ENCODE measurements at regions of chr20 and their contacts with region 1.

Region 1: GRCh38 chr20:58179432-58180099 is 48.9 kb downstream of the ANKRD60 start:
- DNase-seq: peak; percentile 77
- ATAC-seq: peak; percentile 74

Region 2: DNA sequence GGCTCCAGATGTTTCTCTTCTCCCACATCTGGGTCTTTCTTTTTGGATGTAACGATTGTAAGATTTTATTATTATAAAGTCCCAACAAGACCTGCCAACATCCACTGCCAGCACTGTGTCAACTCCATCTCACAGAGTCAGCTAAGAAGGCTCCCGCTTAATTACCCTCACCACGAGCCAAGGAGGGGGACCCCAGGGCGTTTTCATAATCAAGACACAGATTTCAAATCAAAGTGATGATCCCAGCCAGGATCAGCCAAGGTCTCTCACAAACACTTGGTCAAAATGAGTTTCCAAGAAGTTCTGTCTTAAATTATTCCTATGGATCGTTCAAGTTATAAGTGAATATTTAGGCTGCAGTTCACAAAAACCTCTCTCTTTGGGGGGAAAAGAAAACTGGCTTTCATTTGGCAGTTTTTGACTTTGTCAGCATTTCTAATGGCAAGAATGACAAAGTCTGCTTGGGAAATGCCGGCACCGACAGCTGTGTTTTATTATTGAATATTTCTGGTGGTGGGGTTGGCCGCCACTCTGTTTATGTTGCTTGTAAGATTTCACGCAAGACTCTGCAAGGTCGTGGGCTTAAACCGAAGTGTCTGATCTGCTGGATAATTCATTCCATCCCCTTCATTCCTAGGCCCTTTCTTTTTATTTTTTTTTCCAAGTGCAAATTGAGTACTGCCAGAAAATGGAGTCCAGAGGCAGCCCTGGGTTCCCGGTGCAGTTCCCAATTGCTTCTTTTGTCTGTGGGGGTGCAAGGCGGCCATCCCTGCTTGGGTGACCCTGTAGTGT is 299.6 kb before region 1 on chr20:
- intact Hi-C with region 1: loop called (anchors 10 kb)
- DNase-seq: peak; percentile 75
- ATAC-seq: peak; percentile 85

Region 3: GRCh38 chr20:57908704-57909630 is 270.6 kb before region 1 on chr20:
- intact Hi-C with region 1: no loop called
- DNase-seq: no peak
- ATAC-seq: no peak

Region 4: GRCh38 chr20:58251921-58252591 is 72.5 kb after region 1 on chr20:
- intact Hi-C with region 1: no loop called
- DNase-seq: no peak
- ATAC-seq: no peak

Measured in Right ventricle myocardium inferior (tissue), 1 donor.